WTC11 (cell line): ENCODE measurements at regions of chr2 and their contacts with region 1.

Region 1: GRCh38 chr2:174697255-174697654 is 67.0 kb downstream of the CHRNA1 start:
- DNase-seq: peak; percentile 76
- ATAC-seq: peak; percentile 94
- H3K4me3 Mint-ChIP-seq: no peak overlapping the region
- H3K27ac Mint-ChIP-seq: no peak overlapping the region
- H3K4me1 Mint-ChIP-seq: peaks cover 16% of the 10 kb centered on the region
- H3K27me3 Mint-ChIP-seq: no peaks in the 10 kb centered on the region
- CTCF ChIP-seq: peak; percentile 60

Region 2: GRCh38 chr2:174577967-174578589 is 119.2 kb before region 1 on chr2:
- CTCF ChIA-PET with region 1: interaction called, 18 read pairs
- POLR2A ChIA-PET with region 1: no interaction called
- DNase-seq: no peak
- ATAC-seq: peak; percentile 83
- H3K4me3 Mint-ChIP-seq: no peak overlapping the region
- H3K27ac Mint-ChIP-seq: no peak overlapping the region
- H3K4me1 Mint-ChIP-seq: peaks cover 3% of the 10 kb centered on the region
- H3K27me3 Mint-ChIP-seq: no peaks in the 10 kb centered on the region
- CTCF ChIP-seq: no peak

Region 3: GRCh38 chr2:174708713-174709112 is 11.5 kb after region 1 on chr2:
- CTCF ChIA-PET with region 1: interaction called, 10 read pairs
- POLR2A ChIA-PET with region 1: interaction called, 3 read pairs
- DNase-seq: no peak
- ATAC-seq: no peak
- H3K4me3 Mint-ChIP-seq: no peak overlapping the region
- H3K27ac Mint-ChIP-seq: no peak overlapping the region
- H3K4me1 Mint-ChIP-seq: no peaks in the 10 kb centered on the region
- H3K27me3 Mint-ChIP-seq: 0 out of 2 replicates have a peak, but pooled peaks cover 2% of the 10 kb centered on the region
- CTCF ChIP-seq: no peak

Region 4: DNA sequence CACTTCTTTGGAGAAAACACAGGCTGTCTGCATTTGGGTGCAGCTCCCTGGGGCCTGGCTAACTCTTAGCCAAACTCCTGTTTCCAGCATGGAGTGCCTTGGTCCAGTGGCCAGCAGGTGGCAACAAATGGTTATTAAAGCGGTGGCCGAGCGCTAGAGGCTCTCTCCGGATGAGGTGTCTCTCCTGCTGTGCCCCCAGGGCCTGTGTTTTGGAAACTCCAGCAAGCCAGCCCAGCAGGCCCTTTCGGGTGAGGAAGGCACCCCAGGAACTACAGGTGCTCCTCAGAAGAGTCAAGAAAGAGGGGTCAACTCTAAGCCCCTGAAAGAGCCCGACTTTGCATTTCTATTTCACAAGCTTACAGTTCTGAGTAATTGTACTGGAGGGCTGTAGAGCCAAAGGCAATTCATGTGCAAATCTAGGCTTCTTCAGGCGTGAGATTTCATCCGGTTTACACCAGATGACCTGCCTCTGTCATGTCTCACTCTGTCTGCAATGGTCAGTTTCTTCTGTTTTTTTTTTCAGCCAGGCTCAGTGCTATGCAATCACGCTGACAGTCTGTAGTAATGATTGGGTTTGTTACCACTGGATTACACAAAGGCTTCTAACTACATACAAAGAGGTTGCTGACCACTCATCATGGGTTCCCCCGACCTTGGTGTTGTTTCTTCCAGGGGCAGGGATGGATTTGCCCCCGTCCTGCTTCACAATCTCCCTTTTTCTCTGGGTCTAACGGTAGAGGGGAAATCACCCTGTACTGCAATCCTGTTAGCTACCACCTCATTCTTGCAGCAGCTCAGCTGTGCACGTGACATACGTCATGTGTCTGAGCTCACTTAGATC is 74.6 kb after region 1 on chr2:
- CTCF ChIA-PET with region 1: interaction called, 20 read pairs
- POLR2A ChIA-PET with region 1: no interaction called
- DNase-seq: peak; percentile 90
- ATAC-seq: peak; percentile 78
- H3K4me3 Mint-ChIP-seq: peak overlapping the region; percentile 34; the same call in 1 of the 2 replicates
- H3K27ac Mint-ChIP-seq: peak overlapping the region; percentile 97
- H3K4me1 Mint-ChIP-seq: peaks cover 70% of the 10 kb centered on the region
- H3K27me3 Mint-ChIP-seq: no peaks in the 10 kb centered on the region
- CTCF ChIP-seq: peak; percentile 60; the same call in 1 of the 2 replicates

Region 5: DNA sequence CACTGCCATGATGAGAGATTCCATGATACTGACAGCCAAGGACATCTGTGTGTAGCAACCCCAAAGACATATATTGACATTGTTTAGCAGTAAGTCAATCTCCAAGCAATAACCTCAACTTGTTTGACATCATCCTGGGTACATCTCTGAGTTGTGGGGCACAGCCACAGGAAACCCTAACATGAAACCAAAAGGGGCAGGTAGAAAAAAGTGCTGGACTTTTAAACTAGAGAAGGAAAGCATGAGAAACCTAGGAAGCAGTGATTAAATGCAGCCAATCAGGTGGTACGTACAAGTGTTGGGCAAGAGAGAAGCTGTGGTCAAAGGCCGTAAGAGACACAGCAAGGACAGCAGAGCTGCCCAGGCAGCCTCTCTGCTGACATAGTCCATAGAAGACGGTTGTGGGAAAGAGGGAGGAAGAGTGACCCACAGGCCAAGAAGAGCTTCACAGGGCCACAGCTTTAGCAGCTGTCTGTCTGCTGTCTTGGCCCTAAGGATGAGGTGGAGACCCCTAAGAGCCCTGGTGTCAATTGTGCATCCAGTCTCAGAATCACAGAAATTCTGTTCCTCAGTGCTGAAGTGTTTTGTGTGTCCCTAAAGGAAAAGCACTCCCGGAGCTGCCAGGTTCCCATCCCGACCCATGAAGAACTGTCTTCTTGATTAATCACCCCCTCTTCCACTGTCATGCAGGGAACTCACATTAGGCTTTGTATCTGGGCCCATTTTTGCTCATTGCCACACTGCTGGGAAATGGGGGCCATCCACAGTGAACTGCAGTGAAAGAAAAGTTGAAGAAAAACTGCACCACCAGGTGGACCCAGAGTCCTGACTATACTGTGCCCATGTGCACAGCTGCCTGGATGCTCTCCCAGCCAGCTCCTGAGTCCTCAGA is 333.4 kb after region 1 on chr2:
- CTCF ChIA-PET with region 1: interaction called, 22 read pairs
- POLR2A ChIA-PET with region 1: no interaction called
- DNase-seq: peak; percentile 61
- ATAC-seq: peak; percentile 99
- H3K4me3 Mint-ChIP-seq: no peak overlapping the region
- H3K27ac Mint-ChIP-seq: no peak overlapping the region
- H3K4me1 Mint-ChIP-seq: peaks cover 13% of the 10 kb centered on the region
- H3K27me3 Mint-ChIP-seq: no peaks in the 10 kb centered on the region
- CTCF ChIP-seq: 0 out of 2 replicates have a peak, but pooled peaks have one; percentile 18